BJ (cell line): ENCODE measurements at regions of chr3 and their contacts with region 1.

Region 1: GRCh38 chr3:129732200-129732876 is 125.9 kb upstream of the PLXND1 start:
- DNase-seq: no peak
- H3K4me3 ChIP-seq: no peak overlapping the region
- H3K27me3 ChIP-seq: no peaks in the 10 kb centered on the region
- CTCF ChIP-seq: no peak

Region 2: GRCh38 chr3:129469026-129469425 is 263.3 kb before region 1 on chr3:
- CTCF ChIA-PET with region 1: no interaction called
- POLR2A ChIA-PET with region 1: no interaction called
- DNase-seq: no peak
- H3K4me3 ChIP-seq: no peak overlapping the region
- H3K27me3 ChIP-seq: no peaks in the 10 kb centered on the region
- CTCF ChIP-seq: no peak

Region 3: DNA sequence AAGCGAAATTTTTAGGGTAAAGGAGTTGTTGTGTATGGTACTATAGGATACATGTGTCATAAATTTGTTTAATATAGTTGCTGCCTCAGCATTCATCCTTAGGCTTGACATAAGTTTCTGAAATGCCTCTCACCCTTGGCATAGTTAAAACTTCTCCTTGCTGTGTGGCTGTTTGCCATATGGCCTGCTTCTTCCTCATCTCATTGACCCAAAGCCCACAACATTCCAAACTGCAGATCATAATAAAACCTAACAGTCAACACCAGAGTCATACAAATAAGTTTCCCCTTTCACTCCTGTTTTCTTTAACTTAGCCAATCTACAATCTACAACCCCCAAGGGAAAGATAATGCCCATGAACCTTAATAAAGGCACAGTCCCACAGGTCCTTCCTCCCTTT is 24.5 kb after region 1 on chr3:
- CTCF ChIA-PET with region 1: no interaction called
- POLR2A ChIA-PET with region 1: interaction called, 11 read pairs
- DNase-seq: peak; percentile 31
- H3K4me3 ChIP-seq: no peak overlapping the region
- H3K27me3 ChIP-seq: no peaks in the 10 kb centered on the region
- CTCF ChIP-seq: no peak